Activated T-helper 1 cell treated with anti-CD3 and anti-CD28 coated beads, Interleukin-12 subunit alpha, Interleukin-12 subunit beta, Interleukin-2, Interleukin-4 antibody, amounts not matched to agents 30 ng/mL and 10 ng/mL and 1 ng/mL, durations not matched to agents 14 hours and 24 hours and 36 hours (primary cell): ENCODE measurements at regions of chr4 and their contacts with region 1.

Region 1: GRCh38 chr4:40238700-40239548 is 42.1 kb downstream of the RHOH start:
- DNase-seq: peak; percentile 72
- H3K4me3 Mint-ChIP-seq: peak overlapping the region; percentile 83
- H3K27ac Mint-ChIP-seq: peak overlapping the region; percentile 92
- H3K4me1 Mint-ChIP-seq: peaks cover 90% of the 10 kb centered on the region
- H3K27me3 Mint-ChIP-seq: no peaks in the 10 kb centered on the region

Region 2: DNA sequence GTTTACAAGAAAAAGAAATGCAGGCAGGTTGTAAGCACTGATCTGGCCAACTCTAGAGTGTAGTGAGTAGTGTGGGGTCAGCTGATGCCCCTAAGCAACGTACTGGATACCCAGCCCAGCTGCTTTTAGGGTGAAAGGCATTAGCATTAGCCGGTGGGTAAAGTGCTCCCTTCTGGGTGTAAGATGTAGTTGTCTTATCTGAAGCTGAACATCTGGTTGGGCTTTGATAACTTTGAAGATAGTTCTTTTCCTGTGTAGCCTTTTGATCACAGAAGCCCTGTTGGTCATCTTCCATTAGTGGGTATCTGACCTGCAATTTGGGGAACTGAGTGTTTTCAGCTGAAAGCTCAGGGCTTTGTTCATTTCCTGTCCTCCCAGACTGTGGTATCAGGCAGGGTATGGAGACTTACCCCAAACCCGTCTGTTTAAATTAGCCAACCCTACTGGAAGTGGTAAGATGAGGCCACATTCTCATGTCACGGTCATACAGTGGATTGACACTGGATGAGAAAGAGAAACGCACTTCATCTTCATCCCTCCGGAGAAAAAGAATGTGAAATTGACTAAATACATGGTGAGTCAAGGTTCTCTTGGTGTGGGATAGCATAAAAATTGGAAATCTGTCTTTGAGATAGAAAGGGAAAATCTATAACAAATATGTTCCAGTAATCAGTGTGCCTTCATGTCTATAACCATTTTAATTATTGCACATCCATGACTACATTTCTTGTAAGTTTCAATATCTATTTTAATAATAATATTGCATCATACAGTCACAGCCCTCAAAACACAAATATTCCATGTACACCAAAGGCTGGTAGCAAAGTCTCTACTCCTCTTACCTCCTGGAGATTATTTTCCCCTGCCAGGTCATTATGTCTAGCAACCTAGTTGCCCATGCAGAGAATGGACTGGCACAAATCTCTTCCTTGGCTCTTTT is 33.4 kb before region 1 on chr4:
- intact Hi-C with region 1: loop called (anchors 1 kb)
- DNase-seq: no peak
- H3K4me3 Mint-ChIP-seq: peak overlapping the region; percentile 95
- H3K27ac Mint-ChIP-seq: peak overlapping the region; percentile 97
- H3K4me1 Mint-ChIP-seq: peaks cover 82% of the 10 kb centered on the region
- H3K27me3 Mint-ChIP-seq: no peaks in the 10 kb centered on the region

Region 3: GRCh38 chr4:40289366-40290188 is 50.7 kb after region 1 on chr4:
- intact Hi-C with region 1: loop called (anchors 2 kb)
- DNase-seq: no peak
- H3K4me3 Mint-ChIP-seq: peak overlapping the region; percentile 31
- H3K27ac Mint-ChIP-seq: peak overlapping the region; percentile 78
- H3K4me1 Mint-ChIP-seq: peaks cover 56% of the 10 kb centered on the region
- H3K27me3 Mint-ChIP-seq: no peaks in the 10 kb centered on the region